ENCODE measurements at regions of chr16 and their contacts with region 1.

Region 1: DNA sequence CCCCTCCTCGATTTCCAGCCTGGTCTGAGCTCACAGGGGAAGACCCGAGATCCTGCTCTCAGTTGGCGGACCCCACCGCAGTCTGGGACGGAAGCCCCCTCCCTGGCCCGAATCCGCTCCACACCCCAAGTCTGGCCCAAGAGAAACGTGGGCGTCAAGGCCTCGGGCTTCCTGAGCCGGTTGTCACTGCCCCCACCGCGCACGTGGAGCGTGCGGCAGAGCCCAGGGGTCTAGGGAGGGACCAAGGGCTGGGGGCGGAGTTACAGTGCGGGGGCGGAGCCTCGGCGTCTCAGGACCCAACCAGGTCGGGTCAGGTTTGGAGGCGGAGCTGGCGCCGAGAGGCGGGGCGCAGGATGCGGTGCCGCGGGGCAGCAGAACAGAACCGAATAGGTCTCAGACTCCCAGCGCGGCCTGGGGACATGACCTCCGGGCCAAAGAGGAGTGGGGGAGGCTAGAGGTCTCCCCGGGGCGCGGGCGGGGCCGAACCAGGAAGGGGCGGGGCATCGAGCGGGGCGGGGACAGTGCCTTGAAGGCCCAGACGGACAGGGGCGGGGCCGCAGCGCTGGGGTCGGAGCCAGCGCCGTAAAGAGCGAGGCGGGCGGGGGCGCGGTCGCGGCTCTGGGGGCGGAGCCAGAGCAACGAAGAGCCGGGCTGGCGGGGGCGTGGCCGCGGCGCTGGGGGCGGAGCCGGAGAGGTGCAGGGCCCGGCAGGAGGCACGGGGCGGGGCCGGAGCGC is 431 bp upstream of the ZFPM1 start:
- DNase-seq: peak; percentile 92
- H3K4me3 ChIP-seq: peak overlapping the region; percentile 56 to 84 (median 60)
- H3K27ac ChIP-seq: no peak overlapping the region
- H3K4me1 ChIP-seq: peaks cover 30% of the 10 kb centered on the region
- H3K27me3 ChIP-seq: no peaks in the 10 kb centered on the region
- CTCF ChIP-seq: no peak

Region 2: GRCh38 chr16:88497561-88498462 is 45.2 kb after region 1 on chr16:
- CTCF ChIA-PET with region 1: no interaction called
- dilution Hi-C with region 1: loop called (anchors 5 kb)
- in situ Hi-C with region 1: no loop called
- intact Hi-C with region 1: no loop called
- DNase-seq: no peak
- H3K4me3 ChIP-seq: no peak overlapping the region
- H3K27ac ChIP-seq: no peak overlapping the region
- H3K4me1 ChIP-seq: no peaks in the 10 kb centered on the region
- H3K27me3 ChIP-seq: no peaks in the 10 kb centered on the region
- CTCF ChIP-seq: no peak

Region 3: DNA sequence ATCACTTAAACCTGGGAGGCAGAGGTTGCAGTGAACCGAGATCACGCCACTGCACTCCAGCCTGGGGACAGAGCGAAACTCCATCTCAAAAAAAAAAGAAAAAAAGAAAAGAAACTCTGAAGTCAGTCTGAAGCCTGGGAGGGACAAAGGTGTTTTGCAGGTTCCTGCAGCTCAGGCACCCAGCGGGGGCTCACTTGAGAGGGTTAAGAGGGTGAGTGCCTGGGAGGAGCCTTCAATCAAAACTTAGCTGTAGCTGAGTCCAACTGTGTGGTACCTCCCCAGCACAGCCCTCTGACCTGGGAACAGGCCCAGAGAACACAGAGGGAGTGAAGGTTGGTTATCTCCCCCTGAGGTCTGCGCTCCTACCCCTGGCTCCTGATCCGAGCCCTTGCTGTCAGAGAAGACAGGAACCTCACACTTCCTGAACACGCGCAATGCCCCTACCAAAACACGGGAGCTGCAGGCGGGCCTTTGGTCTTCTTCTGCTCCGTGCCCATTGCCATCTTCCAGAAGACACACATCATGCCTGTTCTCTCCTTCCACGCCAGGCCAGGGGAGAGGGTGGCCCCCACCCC is 97.1 kb after region 1 on chr16:
- CTCF ChIA-PET with region 1: no interaction called
- dilution Hi-C with region 1: loop called (anchors 5 kb)
- in situ Hi-C with region 1: no loop called
- intact Hi-C with region 1: no loop called
- DNase-seq: no peak
- H3K4me3 ChIP-seq: no peak overlapping the region
- H3K27ac ChIP-seq: no peak overlapping the region
- H3K4me1 ChIP-seq: no peaks in the 10 kb centered on the region
- H3K27me3 ChIP-seq: no peaks in the 10 kb centered on the region
- CTCF ChIP-seq: no peak

Region 4: DNA sequence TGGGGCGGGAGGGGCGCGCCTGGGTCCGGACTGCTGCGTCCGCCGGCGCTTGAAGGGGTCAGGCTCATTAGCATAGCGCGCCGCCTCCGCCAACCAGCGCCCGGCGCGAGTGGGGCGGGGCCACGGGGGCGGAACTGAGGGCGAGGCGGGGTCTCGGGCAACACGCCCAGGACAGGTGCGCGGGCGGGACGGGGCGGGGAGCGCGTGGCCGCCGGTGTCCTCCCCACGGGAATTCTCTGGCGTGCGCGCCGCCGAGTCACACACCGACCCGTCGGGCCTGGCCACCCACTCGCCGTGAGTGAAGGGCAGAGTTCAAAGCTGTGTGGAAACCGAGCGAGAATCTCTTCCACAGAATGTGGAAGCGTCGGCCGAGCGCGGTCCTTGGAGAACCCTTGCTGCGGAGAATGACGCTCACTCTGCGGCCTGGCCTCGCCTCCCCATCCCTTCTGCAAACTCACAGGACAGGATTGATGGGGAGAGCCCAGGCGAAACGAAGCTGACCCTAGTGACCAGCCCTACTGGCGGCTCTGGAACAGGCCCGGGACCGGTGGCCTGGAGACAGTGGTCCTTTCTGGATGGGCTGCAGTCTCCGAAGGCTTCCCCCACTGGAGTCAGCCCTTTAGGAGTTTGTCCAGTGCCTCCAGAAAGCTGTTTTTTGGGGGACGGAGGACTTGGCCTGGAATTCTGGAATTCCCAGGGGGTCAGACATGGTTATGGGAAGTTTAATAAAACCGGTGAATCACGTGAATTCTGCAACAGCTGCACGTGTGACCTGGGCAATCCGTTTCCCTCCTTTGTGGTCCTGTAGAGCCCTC is 234.0 kb after region 1 on chr16 and contains the start of gene SNAI3:
- CTCF ChIA-PET with region 1: no interaction called
- dilution Hi-C with region 1: no loop called
- in situ Hi-C with region 1: no loop called
- intact Hi-C with region 1: loop called (anchors 5 kb)
- DNase-seq: peak; percentile 75
- H3K4me3 ChIP-seq: peak within 1 kb of the TSS; percentile 39 to 55 (median 46)
- H3K27ac ChIP-seq: no peak within 1 kb of the TSS
- H3K4me1 ChIP-seq: peaks cover 17% of the 10 kb centered on the region
- H3K27me3 ChIP-seq: no peaks in the 10 kb centered on the region
- CTCF ChIP-seq: no peak
- total RNA-seq, gene SNAI3: not detected

Region 5: DNA sequence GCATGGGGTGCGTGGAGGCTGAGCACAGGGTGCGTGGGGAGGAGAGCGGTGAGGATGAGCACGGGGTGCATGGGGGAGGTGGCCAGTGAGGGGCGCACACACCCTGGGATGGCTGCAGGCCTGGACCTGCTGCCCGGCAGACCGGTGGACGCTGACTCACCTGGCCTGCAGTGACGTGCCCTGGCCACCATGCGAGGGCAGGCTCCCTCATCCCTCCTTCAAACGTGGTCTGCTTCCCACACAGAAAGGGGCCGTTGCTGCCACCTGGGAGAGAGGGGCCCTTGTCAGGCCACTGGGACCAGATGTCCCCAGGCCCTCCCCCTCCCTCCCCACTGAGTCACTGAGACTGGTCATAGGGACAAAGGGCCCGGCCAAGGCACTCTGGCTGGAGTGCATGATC is 379.2 kb after region 1 on chr16:
- CTCF ChIA-PET with region 1: no interaction called
- dilution Hi-C with region 1: no loop called
- in situ Hi-C with region 1: no loop called
- intact Hi-C with region 1: no loop called
- DNase-seq: peak; percentile 54
- H3K4me3 ChIP-seq: no peak overlapping the region
- H3K27ac ChIP-seq: no peak overlapping the region
- H3K4me1 ChIP-seq: peaks cover 9% of the 10 kb centered on the region
- H3K27me3 ChIP-seq: no peaks in the 10 kb centered on the region
- CTCF ChIP-seq: peak; percentile 17 to 44

Measured in mammary epithelial cell (primary cell).